ENCODE measurements at regions of chr6 and their contacts with region 1.

Region 1: DNA sequence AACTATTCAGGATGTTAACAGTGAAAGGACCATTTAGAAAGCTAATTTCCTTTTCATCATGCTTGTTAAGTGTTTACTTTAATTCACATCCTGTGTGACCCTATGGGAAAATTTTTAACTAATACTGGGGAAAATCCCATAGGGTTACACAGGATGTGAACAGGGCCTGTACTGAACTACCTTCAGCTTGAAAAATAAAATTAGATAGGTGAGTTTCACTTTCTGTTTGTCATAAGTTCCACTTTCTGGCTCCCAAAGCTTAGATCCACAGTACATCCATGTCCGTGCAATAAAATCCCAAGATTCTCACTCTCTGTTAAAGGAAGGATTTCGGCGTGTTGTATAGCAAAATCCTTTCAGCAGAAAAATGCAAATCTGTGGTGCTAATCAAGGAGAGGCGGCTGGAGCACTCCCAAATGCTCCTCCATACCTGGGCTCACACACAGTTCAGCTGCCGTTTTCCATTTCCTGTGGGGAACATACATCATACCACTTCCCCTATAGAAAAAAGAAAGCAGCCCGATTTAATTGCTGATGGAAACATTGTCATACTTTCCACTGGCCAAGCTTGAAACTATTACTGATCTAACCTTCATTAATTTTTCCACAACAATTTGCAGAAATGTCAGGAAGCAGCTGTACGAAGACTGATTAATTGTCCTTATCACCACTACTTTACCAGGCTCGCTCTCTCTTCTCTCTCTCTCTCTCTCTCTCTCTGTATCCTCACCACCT is 125.2 kb downstream of the HIVEP2 start:
- DNase-seq: peak; percentile 65
- H3K4me3 Mint-ChIP-seq: peak overlapping the region; percentile 79
- H3K27ac Mint-ChIP-seq: peak overlapping the region; percentile 94
- H3K4me1 Mint-ChIP-seq: peaks cover 83% of the 10 kb centered on the region
- H3K27me3 Mint-ChIP-seq: no peaks in the 10 kb centered on the region

Region 2: DNA sequence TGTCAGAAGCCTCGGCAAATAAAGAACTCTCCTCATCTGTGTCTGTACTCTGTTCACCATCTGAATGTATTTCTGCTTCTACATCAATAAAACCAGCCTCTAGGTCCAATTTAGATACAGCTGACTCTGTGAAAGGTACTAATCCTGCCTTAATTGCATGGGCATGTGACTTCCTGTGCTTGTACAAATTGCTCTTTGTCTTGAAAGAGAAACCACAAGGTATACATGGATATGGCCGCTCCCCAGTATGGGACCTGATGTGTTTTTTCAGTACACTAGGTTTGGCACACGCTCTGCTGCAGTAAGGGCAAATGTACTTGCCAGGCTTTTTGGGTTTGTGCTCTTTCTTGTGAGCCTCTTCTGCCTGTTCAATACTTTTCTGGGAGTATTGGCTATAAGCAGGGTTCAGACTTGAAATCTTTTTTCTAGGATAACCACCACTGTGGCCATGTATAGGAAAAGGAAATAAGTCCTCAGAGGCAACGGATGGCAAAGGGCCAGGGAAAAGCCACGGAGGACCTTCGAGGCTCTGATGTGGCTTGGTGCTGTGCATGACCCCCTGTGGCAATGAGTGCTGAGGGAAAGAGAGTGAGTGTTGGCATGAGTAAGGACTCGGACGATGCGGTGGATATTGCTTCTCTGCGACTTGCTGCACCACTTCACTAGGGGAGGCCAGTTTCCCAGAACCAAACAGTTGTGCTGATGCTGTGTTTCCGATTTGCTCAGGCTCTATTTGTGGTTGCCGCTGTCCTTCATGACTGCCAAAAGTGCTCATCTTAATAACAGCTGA is 45.7 kb before region 1 on chr6:
- CTCF ChIA-PET with region 1: no interaction called
- intact Hi-C with region 1: loop called (anchors 1 kb)
- DNase-seq: peak; percentile 46
- H3K4me3 Mint-ChIP-seq: no peak overlapping the region
- H3K27ac Mint-ChIP-seq: peak overlapping the region; percentile 79
- H3K4me1 Mint-ChIP-seq: peaks cover 59% of the 10 kb centered on the region
- H3K27me3 Mint-ChIP-seq: no peaks in the 10 kb centered on the region

Region 3: DNA sequence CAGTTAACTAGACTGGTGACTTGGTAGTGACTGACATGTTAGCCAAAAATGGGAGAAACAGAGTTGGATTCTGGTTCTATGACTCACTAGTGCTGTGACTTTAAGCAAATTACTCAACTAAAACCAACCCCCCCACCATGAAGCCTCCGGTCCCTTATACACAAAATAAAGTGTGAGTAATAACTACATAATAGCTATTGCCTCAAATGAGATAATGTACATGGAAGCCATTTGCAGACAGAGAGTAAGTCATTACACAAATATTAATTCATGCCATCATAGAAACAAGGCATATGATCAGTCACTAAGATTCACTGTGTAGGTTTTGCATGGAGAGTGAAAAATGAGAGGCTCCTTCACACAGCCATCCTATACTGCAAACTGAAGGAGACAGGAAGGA is 13.3 kb after region 1 on chr6:
- CTCF ChIA-PET with region 1: interaction called, 4 read pairs
- intact Hi-C with region 1: loop called (anchors 1 kb)
- DNase-seq: peak; percentile 75
- H3K4me3 Mint-ChIP-seq: no peak overlapping the region
- H3K27ac Mint-ChIP-seq: peak overlapping the region; percentile 81
- H3K4me1 Mint-ChIP-seq: peaks cover 84% of the 10 kb centered on the region
- H3K27me3 Mint-ChIP-seq: no peaks in the 10 kb centered on the region

Region 4: GRCh38 chr6:142871910-142872331 is 52.2 kb after region 1 on chr6:
- CTCF ChIA-PET with region 1: interaction called, 6 read pairs
- intact Hi-C with region 1: loop called (anchors 1 kb)
- DNase-seq: peak; percentile 83
- H3K4me3 Mint-ChIP-seq: peak overlapping the region; percentile 33
- H3K27ac Mint-ChIP-seq: peak overlapping the region; percentile 84
- H3K4me1 Mint-ChIP-seq: peaks cover 83% of the 10 kb centered on the region
- H3K27me3 Mint-ChIP-seq: no peaks in the 10 kb centered on the region

Region 5: DNA sequence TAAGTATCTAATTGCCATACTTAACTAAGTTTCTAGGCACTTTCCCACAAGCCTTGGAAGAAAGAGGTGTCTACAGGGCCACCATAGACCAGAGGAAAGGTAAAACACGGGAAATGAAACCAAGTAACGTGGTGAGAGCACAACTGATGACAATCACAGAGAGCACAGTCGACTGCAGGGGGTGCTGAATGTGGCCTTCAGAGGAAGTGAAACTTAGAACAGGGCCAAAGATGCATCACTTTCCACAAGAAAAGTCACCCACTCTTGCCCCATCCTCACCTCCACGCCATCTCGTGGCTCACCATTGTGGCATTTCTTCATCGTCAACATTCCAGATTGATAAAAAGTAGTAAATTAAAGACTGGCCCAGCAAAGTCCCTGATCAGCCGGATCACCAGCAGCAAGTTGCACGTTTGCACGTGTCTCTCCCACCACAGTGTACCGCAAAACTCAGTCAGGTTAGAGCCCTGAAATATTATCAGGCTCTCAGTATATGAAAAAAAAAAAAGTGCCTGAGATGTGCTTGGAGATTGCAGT is 93.8 kb after region 1 on chr6:
- CTCF ChIA-PET with region 1: no interaction called
- intact Hi-C with region 1: loop called (anchors 1 kb)
- DNase-seq: peak; percentile 82
- H3K4me3 Mint-ChIP-seq: peak overlapping the region; percentile 64
- H3K27ac Mint-ChIP-seq: peak overlapping the region; percentile 96
- H3K4me1 Mint-ChIP-seq: peaks cover 84% of the 10 kb centered on the region
- H3K27me3 Mint-ChIP-seq: no peaks in the 10 kb centered on the region